ENCODE measurements at regions of chr6 and their contacts with region 1.

Region 1: DNA sequence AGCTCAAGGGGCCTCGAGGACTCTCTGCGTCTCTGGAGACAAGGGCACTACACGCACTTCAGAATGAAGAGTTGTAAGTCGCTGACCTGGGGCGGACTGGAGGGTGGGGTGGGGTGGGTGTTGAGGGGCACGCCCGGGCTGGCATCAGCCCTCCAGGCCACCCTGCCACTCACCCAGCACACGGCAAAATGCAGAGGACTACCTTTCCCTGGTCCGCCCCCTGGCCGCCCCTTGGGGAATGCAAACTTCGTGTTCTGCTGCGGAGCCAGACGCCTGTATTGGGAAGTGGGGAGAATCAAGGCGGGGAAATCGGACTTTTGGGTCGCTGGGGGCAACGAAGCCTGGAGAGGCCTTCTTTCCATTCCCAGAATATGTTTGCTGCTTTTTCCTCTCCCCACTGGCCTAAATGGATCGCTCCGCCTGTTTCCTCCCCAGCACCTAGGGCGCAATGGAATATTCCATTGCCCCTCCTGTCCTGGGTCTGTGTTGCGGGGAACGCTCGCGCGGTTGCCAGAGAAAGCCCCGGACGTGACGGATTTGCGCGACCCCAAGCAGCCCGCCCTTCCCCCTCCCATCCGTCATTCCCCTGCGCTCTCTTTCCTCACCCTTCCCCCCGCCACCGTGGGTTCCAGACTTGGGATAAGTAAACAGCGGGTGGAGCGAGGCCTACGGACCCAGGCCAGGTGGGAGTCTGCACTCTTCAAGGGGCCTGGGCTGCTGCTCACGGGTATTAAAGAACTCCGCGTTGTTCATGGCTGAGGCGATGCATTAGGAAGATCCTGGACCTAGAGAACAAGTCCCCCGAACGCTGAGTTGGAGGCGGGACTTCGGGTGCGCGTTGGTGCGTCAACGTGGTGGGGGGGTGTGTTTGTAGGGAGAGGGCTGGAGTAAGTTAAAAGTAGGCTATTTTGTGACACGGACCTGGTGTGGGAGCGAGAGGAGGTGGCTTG is at the start of gene PPT2:
- DNase-seq: peak; percentile 74 to 90
- ATAC-seq: peak; percentile 74 to 84 (median 78)
- H3K4me3 ChIP-seq: peak within 1 kb of the TSS; percentile 68
- H3K4me3 Mint-ChIP-seq: peak within 1 kb of the TSS; percentile 96
- H3K27ac ChIP-seq: peak within 1 kb of the TSS; percentile 68
- H3K27ac Mint-ChIP-seq: peak within 1 kb of the TSS; percentile 90 to 98
- H3K4me1 ChIP-seq: peaks cover 37% of the 10 kb centered on the region
- H3K4me1 Mint-ChIP-seq: peaks cover 38 to 49% of the 10 kb centered on the region in 2 donors
- H3K27me3 ChIP-seq: peaks cover 12% of the 10 kb centered on the region
- H3K27me3 Mint-ChIP-seq: peaks cover 10 to 19% of the 10 kb centered on the region in 2 donors
- CTCF ChIP-seq: no peak
- total RNA-seq, gene PPT2: 16.3 to 28.3 (median 19.0) TPM

Region 2: DNA sequence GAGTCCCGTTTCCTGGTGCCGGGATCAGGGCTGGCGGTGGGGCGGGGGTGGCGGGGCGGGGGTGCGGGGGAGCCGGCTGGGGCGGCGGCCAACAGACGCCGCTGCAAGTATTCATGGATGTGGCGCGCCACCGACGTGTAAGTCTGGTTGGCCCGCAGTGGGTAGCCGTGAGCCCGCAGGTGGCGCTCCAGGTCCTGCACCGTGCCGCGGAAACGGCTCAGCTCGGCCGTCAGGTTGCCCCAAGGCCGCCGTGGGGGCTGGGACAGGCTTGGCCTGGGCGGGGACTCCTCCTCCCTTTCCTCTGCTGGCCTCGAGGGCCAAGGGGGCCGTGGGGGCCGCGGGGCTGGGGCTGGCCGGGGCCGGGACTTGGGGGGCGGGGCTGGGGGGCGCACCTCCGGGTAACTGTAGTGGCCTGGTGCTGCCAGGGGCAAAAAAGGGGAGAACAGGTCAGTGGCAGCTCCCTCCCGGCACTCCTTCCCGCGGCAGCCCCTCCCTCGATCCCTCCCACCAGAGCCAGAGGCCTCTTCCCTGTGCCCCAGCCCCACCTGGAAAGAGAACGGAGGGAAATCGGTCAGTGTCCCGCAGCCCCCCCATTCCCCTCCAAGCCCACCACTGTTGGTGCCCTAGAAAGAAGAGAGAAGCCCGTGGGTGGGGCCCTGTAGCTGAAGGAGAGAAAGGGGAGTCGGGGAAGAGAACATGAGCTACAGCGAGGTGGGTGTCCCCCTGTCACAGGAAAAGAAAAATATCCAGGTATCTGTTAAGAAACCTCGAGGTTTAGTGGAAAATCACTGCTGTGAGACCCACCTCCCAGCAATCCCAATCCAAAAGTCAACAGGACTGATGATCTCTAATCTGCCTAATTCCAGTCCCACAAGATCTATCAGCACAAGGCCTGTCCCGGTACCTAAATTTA is 66.0 kb before region 1 on chr6:
- intact Hi-C with region 1: loop called (anchors 2 kb)
- DNase-seq: peak; percentile 59 to 83
- ATAC-seq: peak; percentile 75 to 94 (median 91)
- H3K4me3 ChIP-seq: no peak overlapping the region
- H3K4me3 Mint-ChIP-seq: peak overlapping the region; percentile 6
- H3K27ac ChIP-seq: no peak overlapping the region
- H3K27ac Mint-ChIP-seq: no peak overlapping the region
- H3K4me1 ChIP-seq: peaks cover 8% of the 10 kb centered on the region
- H3K4me1 Mint-ChIP-seq: peaks cover 0 to 6% of the 10 kb centered on the region in 2 donors
- H3K27me3 ChIP-seq: peaks cover 18% of the 10 kb centered on the region
- H3K27me3 Mint-ChIP-seq: peaks cover 35 to 41% of the 10 kb centered on the region in 2 donors
- CTCF ChIP-seq: peak; percentile 26

Region 3: DNA sequence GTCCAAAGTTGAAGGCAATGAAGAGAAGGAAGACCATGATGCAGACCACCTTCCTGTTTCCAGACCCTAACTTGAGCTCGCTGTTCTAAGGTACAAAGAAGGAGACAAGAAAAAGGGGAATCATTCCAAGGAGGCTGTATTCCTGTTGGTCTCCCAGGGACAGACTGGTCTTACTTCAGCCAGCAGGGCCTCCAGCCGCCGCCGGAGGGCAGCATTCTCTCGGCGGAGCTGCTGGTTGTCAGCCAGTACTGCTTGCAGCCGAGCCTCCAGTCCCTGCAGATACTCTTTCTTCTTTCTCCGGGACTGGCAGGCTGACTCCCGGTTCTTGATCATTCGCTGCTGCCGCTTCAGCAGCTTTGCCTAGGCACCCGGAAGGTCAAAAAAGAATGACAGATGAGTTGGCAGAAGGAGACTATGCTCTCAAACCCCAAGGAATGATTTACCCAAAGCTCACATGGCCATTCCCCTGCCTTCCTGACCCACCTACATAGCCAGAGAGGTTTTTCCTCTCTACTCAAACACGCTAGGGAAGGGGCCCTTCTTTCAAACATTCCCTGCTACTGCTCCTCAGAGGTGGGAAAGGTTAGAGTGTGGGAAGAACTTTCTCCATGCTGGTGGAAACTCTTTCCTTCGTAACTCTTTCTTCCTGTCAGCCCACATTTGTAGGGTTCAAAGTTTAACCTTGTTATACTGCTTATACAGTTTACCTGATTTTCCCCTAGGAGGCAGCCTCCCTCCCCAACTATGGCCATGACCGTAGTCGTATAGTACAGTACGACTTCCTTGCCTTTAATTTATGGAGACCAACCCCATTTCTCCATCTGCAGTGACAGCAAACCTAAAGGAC is 34.8 kb before region 1 on chr6:
- intact Hi-C with region 1: loop called (anchors 1 kb)
- DNase-seq: peak; percentile 64 to 79
- ATAC-seq: peak; percentile 83 to 93 (median 92)
- H3K4me3 ChIP-seq: no peak overlapping the region
- H3K4me3 Mint-ChIP-seq: no peak overlapping the region
- H3K27ac ChIP-seq: no peak overlapping the region
- H3K27ac Mint-ChIP-seq: peak overlapping the region; percentile 41 to 51
- H3K4me1 ChIP-seq: no peaks in the 10 kb centered on the region
- H3K4me1 Mint-ChIP-seq: peaks cover under 1 to 22% of the 10 kb centered on the region in 2 donors
- H3K27me3 ChIP-seq: no peaks in the 10 kb centered on the region
- H3K27me3 Mint-ChIP-seq: no peaks in the 10 kb centered on the region
- CTCF ChIP-seq: peak; percentile 79

Region 4: DNA sequence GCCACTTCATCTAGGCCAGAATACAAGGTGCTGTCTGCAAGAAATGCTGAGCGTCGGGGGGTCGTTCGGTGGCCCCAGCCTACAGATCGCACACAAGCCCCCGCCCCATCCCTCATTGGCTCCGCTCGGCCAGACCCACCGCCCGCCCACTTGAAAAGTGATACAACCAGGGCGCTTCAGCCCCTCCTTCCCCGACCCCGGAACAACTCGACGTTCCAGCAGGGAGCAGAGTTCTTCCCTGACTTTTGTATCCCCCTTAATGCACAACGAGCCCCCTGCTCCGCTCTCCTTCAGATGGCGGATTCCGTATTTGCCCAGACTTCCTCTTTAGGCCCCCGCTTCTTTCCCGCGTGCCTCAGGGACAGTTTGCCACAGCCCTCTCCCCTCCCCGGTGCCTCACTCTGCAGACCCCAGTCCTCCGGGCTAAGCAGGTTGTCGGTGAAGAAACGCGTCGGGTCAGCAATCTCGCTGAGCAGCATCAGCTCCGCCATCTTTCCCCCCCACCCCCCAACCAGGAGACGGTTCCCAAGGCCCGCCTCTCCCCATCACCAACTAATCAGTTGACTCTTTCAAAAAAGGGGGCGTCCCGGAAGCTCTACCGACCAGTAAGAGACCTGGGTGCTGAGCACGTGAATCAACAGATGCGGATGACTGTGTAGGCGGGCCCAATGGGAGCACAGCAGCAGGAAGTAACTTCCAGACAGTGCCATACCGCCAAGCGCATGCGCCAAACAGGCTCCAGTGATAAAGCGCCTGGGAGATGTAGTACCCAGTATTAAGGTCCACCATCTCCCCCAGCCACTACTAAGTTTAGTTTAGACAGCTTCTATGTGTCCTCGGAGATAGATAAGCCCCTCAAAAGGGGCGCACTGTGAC is 25.9 kb before region 1 on chr6 and contains the start of gene ATF6B:
- intact Hi-C with region 1: loop called (anchors 1 kb)
- DNase-seq: peak; percentile 91 to 100
- ATAC-seq: peak; percentile 92 to 99 (median 96)
- H3K4me3 ChIP-seq: peak within 1 kb of the TSS; percentile 98
- H3K4me3 Mint-ChIP-seq: peak within 1 kb of the TSS; percentile 94
- H3K27ac ChIP-seq: peak within 1 kb of the TSS; percentile 85
- H3K27ac Mint-ChIP-seq: peak within 1 kb of the TSS; percentile 93 to 98
- H3K4me1 ChIP-seq: peaks cover 37% of the 10 kb centered on the region
- H3K4me1 Mint-ChIP-seq: peaks cover 51 to 56% of the 10 kb centered on the region in 2 donors
- H3K27me3 ChIP-seq: no peaks in the 10 kb centered on the region
- H3K27me3 Mint-ChIP-seq: no peaks in the 10 kb centered on the region
- CTCF ChIP-seq: no peak
- total RNA-seq, gene ATF6B: 157 to 187 (median 178) TPM

Region 5: DNA sequence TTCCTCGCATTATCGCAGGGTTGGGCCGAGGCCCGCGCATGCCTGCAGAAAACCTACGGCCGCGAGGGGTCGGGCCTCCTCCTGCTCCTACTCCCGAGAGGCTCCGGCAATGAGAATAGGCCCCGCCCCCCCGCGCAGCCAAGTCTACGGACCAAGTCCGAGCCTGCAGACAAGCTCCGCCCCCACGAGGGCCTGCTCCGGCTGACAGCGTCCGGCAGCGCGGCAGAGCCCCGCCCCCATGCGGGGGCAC is 41.7 kb after region 1 on chr6:
- intact Hi-C with region 1: loop called (anchors 1 kb)
- DNase-seq: peak; percentile 99
- ATAC-seq: peak; percentile 79 to 94 (median 82)
- H3K4me3 ChIP-seq: no peak overlapping the region
- H3K4me3 Mint-ChIP-seq: peak overlapping the region; percentile 98
- H3K27ac ChIP-seq: peak overlapping the region; percentile 100
- H3K27ac Mint-ChIP-seq: peak overlapping the region; percentile 99
- H3K4me1 ChIP-seq: peaks cover 61% of the 10 kb centered on the region
- H3K4me1 Mint-ChIP-seq: peaks cover 46 to 67% of the 10 kb centered on the region in 2 donors
- H3K27me3 ChIP-seq: no peaks in the 10 kb centered on the region
- H3K27me3 Mint-ChIP-seq: no peaks in the 10 kb centered on the region
- CTCF ChIP-seq: peak; percentile 36